ENCODE measurements at regions of chr2 and their contacts with region 1.

Region 1: DNA sequence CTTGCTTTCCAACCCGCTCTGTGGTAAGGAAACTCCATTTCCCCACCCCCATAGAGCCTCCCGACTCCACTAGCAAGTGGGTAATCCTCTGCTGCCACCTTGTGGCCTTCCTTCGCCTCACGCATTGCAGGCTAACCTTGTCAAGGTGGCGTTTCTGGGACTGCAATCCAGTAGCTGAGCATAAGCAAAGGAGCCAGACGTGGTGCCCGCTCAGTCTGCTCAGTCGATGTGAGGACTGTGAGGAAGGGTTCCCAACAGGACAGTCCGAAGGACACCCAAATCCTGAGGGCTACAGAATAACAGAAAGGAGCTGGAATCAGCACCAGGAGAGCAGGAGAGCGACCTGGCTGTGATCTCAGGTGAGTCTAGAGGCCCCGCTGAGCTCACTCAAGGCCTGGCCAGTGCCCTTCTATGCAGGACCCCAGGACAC is 144.2 kb downstream of the SUCLG1 start:
- DNase-seq: no peak
- H3K4me3 ChIP-seq: no peak overlapping the region
- H3K27me3 ChIP-seq: no peaks in the 10 kb centered on the region
- CTCF ChIP-seq: peak; percentile 96

Region 2: GRCh38 chr2:84022810-84023431 is 292.0 kb before region 1 on chr2:
- CTCF ChIA-PET with region 1: interaction called, 22 read pairs
- POLR2A ChIA-PET with region 1: no interaction called
- DNase-seq: peak; percentile 1
- H3K4me3 ChIP-seq: no peak overlapping the region
- H3K27me3 ChIP-seq: no peaks in the 10 kb centered on the region
- CTCF ChIP-seq: peak; percentile 74

Region 3: GRCh38 chr2:84302513-84303412 is 12.2 kb before region 1 on chr2:
- CTCF ChIA-PET with region 1: interaction called, 24 read pairs
- POLR2A ChIA-PET with region 1: no interaction called
- DNase-seq: no peak
- H3K4me3 ChIP-seq: no peak overlapping the region
- H3K27me3 ChIP-seq: no peaks in the 10 kb centered on the region
- CTCF ChIP-seq: peak; percentile 90

Region 4: DNA sequence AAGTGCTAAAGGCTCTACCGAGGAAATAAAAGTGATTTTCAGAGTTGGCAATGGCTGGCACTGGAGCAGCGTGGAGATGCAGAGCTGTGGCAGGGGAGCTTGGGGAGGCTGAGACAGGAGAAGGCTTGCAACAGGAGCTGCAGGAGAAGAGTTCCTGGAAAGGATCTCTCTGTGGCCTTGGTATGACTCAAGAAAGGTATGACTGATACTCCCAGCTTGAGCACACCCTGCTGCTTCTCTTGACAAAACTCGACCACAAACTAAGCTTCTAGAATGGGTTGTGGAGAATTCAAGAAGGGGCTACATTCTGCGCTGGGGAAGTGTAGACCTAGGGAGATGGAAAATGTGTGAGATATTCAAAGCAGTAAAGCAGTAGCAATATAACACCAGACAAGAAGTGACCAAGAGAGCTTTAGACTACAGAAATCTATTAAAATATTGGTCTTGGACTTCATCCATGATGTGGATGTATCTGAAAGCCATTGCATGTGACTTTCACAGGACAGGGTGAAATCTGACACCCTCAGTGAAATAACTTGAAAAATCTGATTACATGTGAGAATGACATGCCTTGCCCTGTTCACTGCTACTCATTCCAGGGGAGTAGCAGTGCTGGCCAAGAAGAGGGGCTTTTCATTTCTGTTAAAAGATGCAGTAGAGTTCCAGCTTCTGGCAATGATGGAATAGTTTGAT is 102.7 kb after region 1 on chr2:
- CTCF ChIA-PET with region 1: interaction called, 11 read pairs
- POLR2A ChIA-PET with region 1: no interaction called
- DNase-seq: no peak
- H3K4me3 ChIP-seq: no peak overlapping the region
- H3K27me3 ChIP-seq: no peaks in the 10 kb centered on the region
- CTCF ChIP-seq: no peak

Region 5: GRCh38 chr2:85357736-85358135 is 1042.8 kb after region 1 on chr2:
- CTCF ChIA-PET with region 1: no interaction called
- POLR2A ChIA-PET with region 1: no interaction called
- DNase-seq: no peak
- H3K4me3 ChIP-seq: no peak overlapping the region
- H3K27me3 ChIP-seq: no peaks in the 10 kb centered on the region
- CTCF ChIP-seq: no peak